Left cardiac atrium (tissue), 4 donors: ENCODE measurements at regions of chr12 and their contacts with region 1.

Region 1: DNA sequence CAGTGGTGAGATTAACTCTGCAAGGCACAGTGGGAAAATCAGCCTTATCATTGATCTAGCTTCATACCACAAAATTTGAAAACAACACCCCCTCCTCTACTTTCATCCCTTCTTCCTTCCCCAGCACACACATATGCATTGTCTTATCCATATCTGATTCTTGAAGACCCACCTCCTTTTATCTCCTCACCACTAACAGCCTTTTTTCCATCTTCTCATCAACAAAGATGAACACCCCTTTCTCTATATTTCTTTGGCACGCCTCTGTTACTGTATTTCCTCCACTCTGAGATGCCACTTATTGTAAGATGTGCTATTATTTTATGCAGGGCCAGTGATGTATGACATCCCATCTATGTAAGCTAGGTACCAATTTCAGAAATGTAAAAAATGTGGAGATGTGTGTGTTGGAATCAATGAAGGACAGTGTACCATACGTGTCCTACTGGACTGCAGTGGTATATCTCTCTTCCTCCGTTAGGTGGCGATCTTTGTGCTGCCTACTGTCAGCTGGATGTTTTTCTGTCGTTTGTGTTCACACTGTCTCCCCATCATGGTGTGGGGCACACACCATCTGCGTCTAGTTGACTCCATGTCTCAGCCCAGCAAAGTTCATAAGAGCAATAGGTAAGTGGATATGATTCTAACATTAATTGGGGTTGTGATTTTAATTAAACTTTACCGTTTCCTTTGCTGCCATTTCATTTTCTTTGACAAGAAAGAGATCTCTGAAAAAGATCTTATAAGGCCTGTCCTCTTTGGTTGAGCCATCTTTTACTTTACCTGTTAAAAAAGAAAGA is 24.0 kb downstream of the CCDC38 start:
- DNase-seq: no peak
- ATAC-seq: peak in 1 of 2 donors; percentile 80

Region 2: GRCh38 chr12:95998611-95999286 is 80.4 kb after region 1 on chr12:
- intact Hi-C with region 1: loop called (anchors 2 to 5 kb)
- DNase-seq: no peak
- ATAC-seq: peak; percentile 89 to 92